ENCODE measurements at regions of chr1 and their contacts with region 1.

Region 1: DNA sequence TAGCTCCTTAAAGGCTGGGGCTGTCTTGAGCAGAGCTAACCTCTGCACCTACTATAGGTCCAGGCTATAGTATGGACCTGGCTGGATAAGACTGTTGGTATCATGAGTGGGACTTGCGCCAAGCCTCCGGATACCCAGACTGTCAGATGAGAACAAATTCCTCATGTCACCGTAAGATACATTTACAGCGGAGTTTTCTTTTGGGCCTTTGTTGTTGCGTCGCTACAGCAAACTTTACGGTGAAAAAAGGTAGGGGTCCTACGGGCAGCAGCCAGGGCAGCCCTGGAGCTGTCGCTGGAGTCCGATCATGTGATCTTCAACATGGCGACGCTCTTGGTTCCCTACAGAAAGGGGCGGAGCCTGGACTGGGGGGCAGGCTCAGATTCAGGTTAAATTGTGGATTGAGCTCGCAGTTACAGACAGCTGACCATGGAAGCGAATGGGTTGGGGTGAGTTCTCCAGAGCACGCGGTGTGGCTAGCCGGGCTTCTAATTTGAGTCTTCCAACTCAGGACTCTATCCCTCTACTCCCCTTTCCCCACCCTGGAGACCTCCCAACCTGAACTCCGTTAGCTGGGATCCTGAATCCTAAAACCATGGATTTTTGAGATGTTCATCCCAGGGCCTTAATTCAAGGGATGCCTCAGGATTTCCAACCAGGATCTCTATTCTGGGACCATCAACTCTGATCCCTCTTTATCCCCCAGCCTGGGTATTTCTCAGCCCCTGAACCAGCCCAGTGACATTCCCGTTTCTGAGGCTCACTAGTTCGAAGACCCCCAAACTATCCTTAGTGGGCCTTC is at the start of gene UROD:
- DNase-seq: peak; percentile 71
- H3K4me3 ChIP-seq: peak within 1 kb of the TSS; percentile 86
- H3K27me3 ChIP-seq: no peaks in the 10 kb centered on the region
- CTCF ChIP-seq: no peak
- polyA plus RNA-seq, gene UROD: 219 and 303 TPM in 2 replicates

Region 2: DNA sequence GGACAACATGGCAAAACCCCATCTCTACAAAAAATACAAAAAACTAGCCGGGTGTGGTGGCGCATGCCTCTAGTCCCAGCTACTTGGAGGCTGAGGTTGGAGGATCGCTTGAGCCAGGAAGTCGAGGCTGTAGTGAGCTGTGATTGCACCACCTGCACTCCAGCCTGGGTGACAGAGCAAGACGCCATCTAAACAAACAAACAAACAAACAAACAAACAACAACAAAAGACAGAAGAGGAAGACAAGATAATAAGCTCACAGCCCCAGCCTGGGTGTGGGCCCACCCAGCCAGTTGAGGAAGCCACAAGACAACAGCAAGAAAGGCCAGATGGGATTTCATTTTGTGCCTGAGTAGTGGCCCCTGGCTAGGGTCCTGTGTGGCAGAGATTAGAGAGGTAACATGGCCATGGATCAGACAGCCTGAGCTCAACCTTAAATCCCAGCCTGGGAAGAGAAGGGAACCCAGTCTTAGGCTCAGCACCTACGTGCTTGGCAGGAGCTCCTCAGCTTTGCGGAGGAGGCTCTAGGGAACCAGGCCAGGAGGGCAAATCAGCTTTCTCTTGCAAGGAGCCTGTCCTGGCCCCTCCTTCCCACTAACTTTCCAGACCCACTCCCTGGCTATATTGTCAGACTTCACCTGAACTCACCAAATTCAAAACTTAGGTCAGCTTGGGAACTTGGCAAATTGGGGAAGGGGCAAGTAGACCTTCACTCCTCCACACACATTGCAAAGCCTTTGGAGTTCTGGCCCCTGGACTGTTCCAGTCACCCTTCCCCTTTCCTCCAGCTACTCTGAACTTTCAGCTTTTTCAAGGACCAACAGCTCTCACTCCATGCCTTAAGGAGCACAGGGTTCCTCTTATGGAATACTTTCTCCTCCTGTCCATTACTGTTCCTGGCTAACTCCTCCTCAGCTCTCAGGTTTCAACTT is 219.0 kb before region 1 on chr1:
- CTCF ChIA-PET with region 1: interaction called, 21 read pairs
- POLR2A ChIA-PET with region 1: no interaction called
- DNase-seq: no peak
- H3K4me3 ChIP-seq: no peak overlapping the region
- H3K27me3 ChIP-seq: peaks cover 1% of the 10 kb centered on the region; the same call in 1 of the 2 replicates
- CTCF ChIP-seq: no peak

Region 3: GRCh38 chr1:44826375-44827196 is 185.5 kb before region 1 on chr1:
- CTCF ChIA-PET with region 1: interaction called, 13 read pairs
- POLR2A ChIA-PET with region 1: no interaction called
- DNase-seq: no peak
- H3K4me3 ChIP-seq: no peak overlapping the region
- H3K27me3 ChIP-seq: no peaks in the 10 kb centered on the region
- CTCF ChIP-seq: no peak

Region 4: DNA sequence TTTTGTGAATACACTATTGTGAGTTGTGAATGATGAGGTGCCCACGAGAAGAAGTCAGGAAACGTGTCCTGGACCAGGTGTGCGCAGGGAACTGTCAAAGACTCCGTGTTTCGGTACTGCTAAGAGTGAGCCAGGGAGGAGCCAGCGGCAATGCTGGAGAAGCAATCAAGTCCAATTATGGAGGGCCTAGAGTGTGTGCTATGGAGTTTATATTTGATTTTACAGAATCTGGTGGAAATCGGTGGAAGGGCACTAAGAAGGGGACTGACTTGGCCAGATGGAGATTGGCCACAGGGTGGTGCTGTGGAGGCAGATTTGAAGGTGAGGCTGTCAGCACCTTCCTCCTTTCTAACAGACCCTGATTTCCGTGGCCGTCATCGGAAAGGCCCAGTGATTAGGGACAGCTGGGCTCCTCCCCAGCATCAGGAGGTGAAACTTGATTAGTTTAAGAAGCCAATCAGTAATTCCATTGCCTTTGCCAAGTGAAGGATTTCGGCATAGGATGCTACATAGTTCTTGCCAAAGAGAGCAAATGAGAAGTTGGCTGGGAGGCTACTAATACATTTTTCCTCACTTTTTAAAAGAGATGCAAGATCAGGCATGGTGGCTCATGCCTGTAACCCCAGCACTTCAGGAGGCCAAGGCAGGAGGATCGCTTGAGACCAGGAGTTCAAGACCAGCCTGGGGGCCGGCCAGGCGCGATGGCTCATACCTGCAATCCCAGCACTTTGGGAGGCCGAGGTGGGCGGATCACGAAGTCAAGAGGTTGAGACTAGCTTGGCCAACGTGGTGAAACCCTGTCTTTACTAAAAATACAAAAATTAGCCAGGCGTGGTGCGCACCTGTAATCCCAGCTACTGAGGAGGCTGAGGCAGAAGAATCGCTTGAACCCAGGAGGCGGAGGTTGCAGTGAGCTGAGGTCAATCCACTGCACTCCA is 176.0 kb before region 1 on chr1:
- CTCF ChIA-PET with region 1: interaction called, 17 read pairs
- POLR2A ChIA-PET with region 1: no interaction called
- DNase-seq: no peak
- H3K4me3 ChIP-seq: no peak overlapping the region
- H3K27me3 ChIP-seq: no peaks in the 10 kb centered on the region
- CTCF ChIP-seq: peak; percentile 91

Region 5: DNA sequence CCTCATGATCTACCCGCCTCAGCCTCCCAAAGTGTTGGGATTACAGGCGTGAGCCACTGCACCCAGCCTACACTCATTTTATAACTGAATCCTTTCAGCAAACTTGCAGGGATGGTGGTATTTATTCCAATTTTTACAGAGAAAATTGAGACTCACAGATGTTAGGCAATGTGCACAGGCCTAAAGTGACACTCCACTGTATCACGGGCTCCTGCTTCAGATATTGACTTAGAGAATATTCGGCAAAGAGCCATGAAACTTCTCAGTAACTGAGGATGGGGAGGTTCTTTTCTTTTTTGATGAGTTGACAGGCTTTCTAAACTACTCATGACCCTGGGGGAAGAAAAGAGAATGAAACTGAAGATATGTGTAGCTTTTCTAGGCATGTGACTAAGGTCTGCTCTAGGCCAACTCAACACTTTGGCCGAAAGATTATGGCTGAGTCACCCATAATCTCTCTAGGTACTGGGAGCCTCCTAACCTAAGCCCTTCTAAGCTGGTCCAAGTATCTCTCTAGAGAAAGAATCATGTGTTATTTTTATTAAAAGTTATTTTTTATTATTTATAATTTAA is 149.1 kb before region 1 on chr1:
- CTCF ChIA-PET with region 1: no interaction called
- POLR2A ChIA-PET with region 1: no interaction called
- DNase-seq: no peak
- H3K4me3 ChIP-seq: no peak overlapping the region
- H3K27me3 ChIP-seq: no peaks in the 10 kb centered on the region
- CTCF ChIP-seq: no peak

Region 6: DNA sequence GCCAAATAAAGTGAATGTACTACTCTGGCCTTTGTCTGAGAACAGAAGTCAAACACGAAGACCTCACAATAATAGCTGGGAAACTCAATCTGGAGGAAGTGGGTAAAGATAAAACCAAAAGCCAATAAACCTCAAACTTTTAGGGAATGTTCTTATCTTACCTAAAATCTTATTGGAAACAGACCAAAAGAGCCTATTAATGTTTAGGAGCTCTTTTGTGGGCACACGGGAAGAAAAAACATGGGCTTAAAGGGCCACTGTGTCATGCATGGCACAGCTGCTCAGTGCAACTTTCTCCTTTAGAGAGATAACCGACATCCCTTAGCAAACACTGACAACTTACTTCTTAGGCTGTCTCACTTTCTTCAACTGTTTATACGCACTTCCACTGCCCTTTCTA is 41.7 kb before region 1 on chr1:
- CTCF ChIA-PET with region 1: no interaction called
- POLR2A ChIA-PET with region 1: no interaction called
- DNase-seq: no peak
- H3K4me3 ChIP-seq: no peak overlapping the region
- H3K27me3 ChIP-seq: no peaks in the 10 kb centered on the region
- CTCF ChIP-seq: no peak

Region 7: DNA sequence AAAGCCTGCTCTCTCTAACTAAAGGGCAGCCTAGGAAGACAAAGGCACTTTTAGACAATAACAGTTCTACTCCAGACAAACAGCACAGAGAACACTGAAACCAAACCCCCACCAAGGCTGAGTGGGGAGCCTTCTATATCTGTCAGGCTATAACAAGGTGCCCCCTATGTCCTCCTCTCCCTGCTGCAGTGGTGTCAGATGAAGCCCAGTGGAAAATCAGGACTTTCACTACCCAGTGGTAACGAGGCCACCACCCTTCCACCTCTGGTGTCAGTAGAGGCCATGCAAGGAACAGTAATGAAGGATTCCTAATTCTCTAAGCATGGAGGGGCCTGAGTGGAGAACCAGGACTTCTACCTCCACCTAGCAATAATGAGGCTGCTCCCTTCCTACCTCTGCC is 110.7 kb after region 1 on chr1:
- CTCF ChIA-PET with region 1: no interaction called
- POLR2A ChIA-PET with region 1: no interaction called
- DNase-seq: no peak
- H3K4me3 ChIP-seq: no peak overlapping the region
- H3K27me3 ChIP-seq: no peaks in the 10 kb centered on the region
- CTCF ChIP-seq: no peak

Region 8: GRCh38 chr1:45303582-45304310 is 291.7 kb after region 1 on chr1:
- CTCF ChIA-PET with region 1: interaction called, 181 read pairs
- POLR2A ChIA-PET with region 1: interaction called, 12 read pairs
- DNase-seq: peak; percentile 90
- H3K4me3 ChIP-seq: peak overlapping the region; percentile 70
- H3K27me3 ChIP-seq: no peaks in the 10 kb centered on the region
- CTCF ChIP-seq: peak; percentile 73

Measured in BJ (cell line).